AG04450 (cell line): ENCODE measurements at regions of chr17 and their contacts with region 1.

Region 1: GRCh38 chr17:41710468-41711090 is 1.6 kb upstream of the GAST start:
- DNase-seq: no peak
- H3K4me3 ChIP-seq: no peak overlapping the region
- H3K27ac ChIP-seq: no peak overlapping the region
- H3K27me3 ChIP-seq: peaks cover 16% of the 10 kb centered on the region
- CTCF ChIP-seq: no peak

Region 2: DNA sequence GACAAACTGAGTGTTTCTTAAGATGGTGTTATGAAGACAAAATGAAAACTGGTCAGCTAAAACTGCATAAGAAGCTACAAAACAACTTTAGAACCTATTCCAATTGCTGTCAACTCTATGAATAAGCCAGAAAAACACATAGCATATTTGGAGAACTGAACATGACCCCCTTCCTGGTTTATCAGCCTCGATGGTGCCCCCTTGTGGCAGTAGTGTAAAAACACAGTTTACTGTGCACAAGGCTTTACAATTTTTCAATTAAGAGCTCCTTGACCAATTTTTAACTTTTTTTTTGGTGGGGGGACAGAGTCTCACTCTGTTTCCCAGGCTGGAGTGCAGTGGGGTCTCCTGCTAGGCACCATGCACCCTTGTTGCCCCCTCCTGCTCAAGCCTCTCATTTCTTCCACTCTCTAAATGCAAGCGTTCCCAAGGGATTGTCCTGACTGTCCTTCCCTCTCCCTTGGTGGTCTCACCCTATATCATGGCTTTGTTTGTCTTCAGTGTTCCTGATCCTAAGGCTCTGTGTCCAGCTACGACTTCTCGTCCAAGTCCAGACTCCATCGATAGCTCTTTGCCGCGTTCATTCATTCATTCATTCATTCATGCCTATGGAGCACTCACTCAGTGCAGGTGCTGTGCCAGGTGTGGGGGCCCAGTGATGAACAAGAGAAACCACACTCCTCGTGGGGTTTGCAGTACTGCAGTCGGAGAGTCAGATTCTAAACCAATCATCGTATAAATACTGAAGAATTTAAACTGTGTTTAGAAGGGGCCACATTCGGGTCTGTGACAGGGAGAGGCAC is 14.4 kb before region 1 on chr17:
- CTCF ChIA-PET with region 1: interaction called, 17 read pairs
- POLR2A ChIA-PET with region 1: no interaction called
- DNase-seq: no peak
- H3K4me3 ChIP-seq: no peak overlapping the region
- H3K27ac ChIP-seq: no peak overlapping the region
- H3K27me3 ChIP-seq: no peaks in the 10 kb centered on the region
- CTCF ChIP-seq: peak; percentile 84

Region 3: GRCh38 chr17:41724476-41725050 is 14.0 kb after region 1 on chr17:
- CTCF ChIA-PET with region 1: no interaction called
- POLR2A ChIA-PET with region 1: no interaction called
- DNase-seq: no peak
- H3K4me3 ChIP-seq: no peak overlapping the region
- H3K27ac ChIP-seq: no peak overlapping the region
- H3K27me3 ChIP-seq: peaks cover 29% of the 10 kb centered on the region
- CTCF ChIP-seq: no peak

Region 4: DNA sequence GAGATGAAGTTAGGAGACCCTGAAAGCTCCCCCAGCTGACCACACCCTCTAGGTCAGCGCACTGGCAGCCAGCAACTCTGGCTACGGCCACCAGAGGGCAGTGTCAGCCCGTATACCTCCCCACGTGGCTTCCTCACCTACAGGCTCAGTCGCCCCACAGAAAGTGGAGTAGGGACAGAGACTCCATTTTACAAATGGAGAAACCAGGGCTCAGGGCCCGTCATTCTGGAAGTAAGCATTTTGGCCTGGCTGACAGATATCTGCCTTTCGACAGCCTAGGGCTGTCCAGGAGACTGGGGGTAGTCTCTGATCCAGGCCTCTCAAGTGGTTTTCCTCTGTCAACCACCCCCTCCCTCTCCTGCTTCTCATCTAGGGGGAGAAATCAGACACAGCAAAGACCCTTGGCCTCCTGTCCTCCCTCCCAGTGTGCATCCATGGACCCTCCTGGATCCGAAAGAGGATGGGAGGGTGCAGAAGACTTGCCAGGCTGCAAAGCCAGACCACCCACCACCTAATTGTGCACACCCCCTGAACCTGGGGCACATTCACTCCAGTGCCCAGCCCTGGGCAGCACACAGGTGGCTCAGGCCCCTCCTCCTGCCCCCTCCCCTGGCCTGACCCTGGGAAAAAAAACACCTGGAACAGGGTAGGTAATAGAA is 27.6 kb after region 1 on chr17:
- CTCF ChIA-PET with region 1: no interaction called
- POLR2A ChIA-PET with region 1: no interaction called
- DNase-seq: peak; percentile 54
- H3K4me3 ChIP-seq: no peak overlapping the region
- H3K27ac ChIP-seq: no peak overlapping the region
- H3K27me3 ChIP-seq: peaks cover 41% of the 10 kb centered on the region
- CTCF ChIP-seq: peak; percentile 94